WTC11 (cell line): ENCODE measurements at regions of chr6 and their contacts with region 1.

Region 1: DNA sequence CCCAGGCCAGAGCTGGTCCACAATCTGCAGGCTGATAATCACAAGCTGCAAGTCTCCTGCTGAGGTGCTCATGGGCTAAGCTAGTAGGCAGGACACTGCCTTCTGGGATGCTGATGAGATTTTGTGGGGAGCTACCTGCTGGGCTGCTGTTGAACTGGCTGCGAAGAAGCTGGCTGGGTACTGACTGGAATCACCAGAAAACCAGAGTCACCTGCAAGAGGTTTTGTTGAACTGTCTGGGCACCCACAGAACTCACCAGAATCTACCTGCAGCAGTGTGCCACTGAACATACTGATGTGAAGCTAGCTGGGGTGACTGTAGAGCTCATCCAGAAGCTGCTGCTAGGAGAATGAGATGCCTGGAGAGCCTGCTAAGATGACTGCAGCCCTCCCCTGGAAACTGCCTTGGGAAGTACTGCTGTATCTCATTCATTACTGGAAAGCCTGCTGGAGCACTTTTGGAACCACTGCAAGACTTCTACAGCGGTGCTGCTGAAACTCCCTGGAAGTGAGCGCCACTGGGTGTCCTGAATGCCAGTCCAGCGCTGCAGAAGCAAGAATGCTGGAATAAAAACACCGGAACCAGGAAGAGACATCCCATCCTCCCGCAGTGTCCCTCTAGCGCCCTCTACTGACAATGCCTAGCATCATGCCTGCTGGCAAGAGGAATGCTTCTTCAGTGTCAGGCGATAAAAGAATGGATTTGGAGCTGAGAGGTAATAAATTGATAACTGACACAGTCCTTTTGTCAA is 64.9 kb upstream of the ARHGAP18 start:
- DNase-seq: peak; percentile 86
- ATAC-seq: peak; percentile 95
- H3K4me3 Mint-ChIP-seq: peak overlapping the region; percentile 60
- H3K27ac Mint-ChIP-seq: no peak overlapping the region
- H3K4me1 Mint-ChIP-seq: peaks cover 6% of the 10 kb centered on the region
- H3K27me3 Mint-ChIP-seq: peaks cover 3% of the 10 kb centered on the region; the same call in 1 of the 2 replicates
- CTCF ChIP-seq: peak; percentile 90

Region 2: DNA sequence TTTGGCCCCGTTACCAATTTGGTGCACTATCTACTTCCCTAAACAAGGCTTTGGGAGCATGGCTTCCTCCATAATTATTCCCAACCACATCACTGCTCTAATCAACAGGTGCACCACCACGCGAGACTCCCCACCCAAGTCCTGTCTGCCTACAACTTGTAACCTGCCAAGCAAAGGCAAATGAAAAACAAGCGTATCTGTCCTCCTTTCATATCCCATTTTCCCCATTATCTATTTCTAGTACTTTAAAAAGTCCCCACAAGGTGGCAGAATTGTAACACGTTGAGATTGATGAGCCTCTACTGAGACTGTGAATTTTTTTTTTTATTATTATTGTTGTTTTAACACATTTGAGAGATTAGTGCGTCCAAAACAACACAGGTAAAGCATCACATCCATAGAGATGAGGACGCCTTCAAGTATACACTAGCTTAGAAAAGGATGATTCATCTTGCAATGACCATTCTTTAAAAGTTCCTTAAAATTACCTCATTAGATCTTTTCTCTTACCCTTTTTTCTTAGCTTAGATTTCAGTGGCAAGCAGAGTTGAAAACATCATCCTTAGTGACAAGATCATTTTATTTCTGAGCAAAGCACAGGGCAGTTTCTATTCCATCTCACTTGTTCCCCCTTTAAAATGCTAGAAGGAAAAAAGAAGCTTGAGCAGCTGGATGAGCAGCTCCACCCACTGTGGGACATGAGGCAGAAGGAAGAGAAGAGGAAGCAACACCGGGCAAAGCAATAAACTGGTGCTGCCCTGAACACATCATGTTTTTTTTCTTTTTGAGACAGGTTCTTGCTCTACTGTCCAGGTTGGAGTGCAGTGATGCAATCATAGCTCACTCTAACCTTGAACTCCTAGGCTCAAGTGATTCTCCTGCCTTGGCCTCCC is 275.7 kb before region 1 on chr6:
- CTCF ChIA-PET with region 1: interaction called, 11 read pairs
- POLR2A ChIA-PET with region 1: no interaction called
- DNase-seq: no peak
- ATAC-seq: peak; percentile 64
- H3K4me3 Mint-ChIP-seq: no peak overlapping the region
- H3K27ac Mint-ChIP-seq: no peak overlapping the region
- H3K4me1 Mint-ChIP-seq: peaks cover 26% of the 10 kb centered on the region
- H3K27me3 Mint-ChIP-seq: no peaks in the 10 kb centered on the region
- CTCF ChIP-seq: peak; percentile 55

Region 3: DNA sequence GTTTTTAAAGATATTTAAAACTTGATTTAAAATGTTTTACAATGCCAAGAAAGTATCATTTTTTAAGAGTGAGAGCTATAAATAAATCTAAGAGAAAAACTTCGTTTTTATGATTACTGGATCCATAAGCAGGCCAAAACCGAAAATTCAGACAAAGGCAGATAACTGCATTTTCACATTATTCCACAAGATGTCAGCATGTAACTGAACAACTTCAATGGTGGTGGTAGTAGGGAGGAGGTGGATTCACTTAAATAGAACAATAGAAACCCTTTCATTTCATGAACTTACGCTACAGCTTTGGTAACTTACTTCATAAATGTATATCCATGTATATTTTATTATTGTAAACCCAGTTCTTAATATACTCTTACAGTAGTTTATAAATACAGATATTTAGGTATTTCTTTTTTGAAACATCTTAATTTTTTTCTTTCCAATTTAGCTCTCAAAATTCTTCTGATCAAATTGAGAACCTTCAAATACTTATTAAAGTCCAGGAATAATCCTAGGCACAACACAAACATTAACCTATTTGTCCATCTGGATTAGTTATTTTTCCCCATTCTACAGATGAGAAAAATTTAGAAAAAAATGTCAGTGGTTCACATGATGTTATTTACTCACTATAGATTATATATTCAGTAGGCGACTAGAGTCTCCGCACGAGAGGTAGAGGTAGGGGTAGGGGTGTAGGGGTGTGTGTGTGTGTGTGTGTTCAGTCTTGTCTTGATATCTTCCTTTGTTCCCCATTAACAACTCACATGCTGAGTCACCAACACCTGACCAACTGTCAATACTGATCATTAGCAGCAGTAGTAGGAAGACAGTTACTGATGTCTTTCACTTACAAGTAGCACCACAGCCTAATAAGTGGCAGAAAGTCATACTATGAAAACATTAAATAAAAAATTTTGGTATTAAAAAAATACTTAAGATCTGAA is 176.4 kb before region 1 on chr6:
- CTCF ChIA-PET with region 1: interaction called, 23 read pairs
- POLR2A ChIA-PET with region 1: no interaction called
- DNase-seq: no peak
- ATAC-seq: peak; percentile 72
- H3K4me3 Mint-ChIP-seq: no peak overlapping the region
- H3K27ac Mint-ChIP-seq: no peak overlapping the region
- H3K4me1 Mint-ChIP-seq: peaks cover 7% of the 10 kb centered on the region; the same call in 1 of the 2 replicates
- H3K27me3 Mint-ChIP-seq: no peaks in the 10 kb centered on the region
- CTCF ChIP-seq: peak; percentile 53; the same call in 1 of the 2 replicates

Region 4: GRCh38 chr6:129744201-129744879 is 30.5 kb before region 1 on chr6:
- CTCF ChIA-PET with region 1: interaction called, 14 read pairs
- POLR2A ChIA-PET with region 1: no interaction called
- DNase-seq: no peak
- ATAC-seq: peak; percentile 76
- H3K4me3 Mint-ChIP-seq: no peak overlapping the region
- H3K27ac Mint-ChIP-seq: 0 out of 2 replicates have a peak overlapping the region, but pooled peaks have one; percentile 0
- H3K4me1 Mint-ChIP-seq: peaks cover 10% of the 10 kb centered on the region
- H3K27me3 Mint-ChIP-seq: no peaks in the 10 kb centered on the region
- CTCF ChIP-seq: no peak

Region 5: GRCh38 chr6:129785047-129785755 is 10.3 kb after region 1 on chr6:
- CTCF ChIA-PET with region 1: interaction called, 27 read pairs
- POLR2A ChIA-PET with region 1: no interaction called
- DNase-seq: no peak
- ATAC-seq: no peak
- H3K4me3 Mint-ChIP-seq: no peak overlapping the region
- H3K27ac Mint-ChIP-seq: no peak overlapping the region
- H3K4me1 Mint-ChIP-seq: peaks cover 4% of the 10 kb centered on the region; the same call in 1 of the 2 replicates
- H3K27me3 Mint-ChIP-seq: no peaks in the 10 kb centered on the region
- CTCF ChIP-seq: no peak

Region 6: DNA sequence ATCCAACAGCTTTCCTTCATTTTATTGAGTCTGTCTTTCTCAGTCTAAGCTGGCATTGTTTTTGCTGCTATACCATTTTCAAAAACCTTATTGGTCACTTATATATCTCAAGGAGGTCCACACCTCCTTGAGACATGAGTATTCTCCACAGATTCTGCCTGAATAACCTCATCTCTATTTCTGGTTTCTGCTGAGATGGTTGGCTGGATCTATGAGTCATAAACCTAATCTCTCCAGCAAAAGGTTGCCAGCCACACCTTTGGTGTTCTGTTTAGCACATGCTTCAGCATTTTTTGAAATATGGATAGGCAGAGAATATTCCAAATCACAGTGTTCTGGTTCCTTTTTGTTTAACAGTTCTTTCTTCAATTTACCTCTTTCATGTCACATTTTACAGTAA is 127.0 kb after region 1 on chr6:
- CTCF ChIA-PET with region 1: no interaction called
- POLR2A ChIA-PET with region 1: no interaction called
- DNase-seq: no peak
- ATAC-seq: no peak
- H3K4me3 Mint-ChIP-seq: no peak overlapping the region
- H3K27ac Mint-ChIP-seq: no peak overlapping the region
- H3K4me1 Mint-ChIP-seq: peaks cover 3% of the 10 kb centered on the region
- H3K27me3 Mint-ChIP-seq: no peaks in the 10 kb centered on the region
- CTCF ChIP-seq: no peak

Region 7: GRCh38 chr6:130020907-130021629 is 246.2 kb after region 1 on chr6:
- CTCF ChIA-PET with region 1: interaction called, 15 read pairs
- POLR2A ChIA-PET with region 1: no interaction called
- DNase-seq: peak; percentile 72
- ATAC-seq: peak; percentile 36
- H3K4me3 Mint-ChIP-seq: peak overlapping the region; percentile 94
- H3K27ac Mint-ChIP-seq: no peak overlapping the region
- H3K4me1 Mint-ChIP-seq: peaks cover 21% of the 10 kb centered on the region
- H3K27me3 Mint-ChIP-seq: peaks cover 4% of the 10 kb centered on the region; the same call in 1 of the 2 replicates
- CTCF ChIP-seq: peak; percentile 53